ENCODE measurements at regions of chr18 and their contacts with region 1.

Region 1: GRCh38 chr18:25298853-25299274 is 53.1 kb downstream of the ZNF521 start:
- DNase-seq: peak; percentile 98
- H3K4me3 ChIP-seq: peak overlapping the region in 1 of 3 experiments; percentile 29
- H3K27ac ChIP-seq: peak overlapping the region; percentile 94
- H3K4me1 ChIP-seq: peaks cover 39% of the 10 kb centered on the region
- H3K27me3 ChIP-seq: no peaks in the 10 kb centered on the region
- CTCF ChIP-seq: no peak
- POLR2A ChIP-seq: peak; percentile 70

Region 2: GRCh38 chr18:25099895-25100294 is 199.0 kb before region 1 on chr18:
- CTCF ChIA-PET with region 1: no interaction called
- POLR2A ChIA-PET with region 1: no interaction called
- dilution Hi-C with region 1: no loop called
- intact Hi-C with region 1: loop called (anchors 2 kb)
- DNase-seq: peak; percentile 63
- H3K4me3 ChIP-seq: no peak overlapping the region
- H3K27ac ChIP-seq: peak overlapping the region; percentile 20
- H3K4me1 ChIP-seq: peaks cover 58% of the 10 kb centered on the region
- H3K27me3 ChIP-seq: no peaks in the 10 kb centered on the region
- CTCF ChIP-seq: no peak
- POLR2A ChIP-seq: no peak

Region 3: GRCh38 chr18:25253136-25253535 is 45.7 kb before region 1 on chr18:
- CTCF ChIA-PET with region 1: no interaction called
- POLR2A ChIA-PET with region 1: no interaction called
- dilution Hi-C with region 1: no loop called
- intact Hi-C with region 1: loop called (anchors 1 kb)
- DNase-seq: peak; percentile 63
- H3K4me3 ChIP-seq: no peak overlapping the region
- H3K27ac ChIP-seq: peak overlapping the region; percentile 74
- H3K4me1 ChIP-seq: peaks cover 61% of the 10 kb centered on the region
- H3K27me3 ChIP-seq: no peaks in the 10 kb centered on the region
- CTCF ChIP-seq: no peak
- POLR2A ChIP-seq: no peak

Region 4: GRCh38 chr18:25279133-25279532 is 19.7 kb before region 1 on chr18:
- CTCF ChIA-PET with region 1: interaction called, 3 read pairs
- POLR2A ChIA-PET with region 1: interaction called, 5 read pairs
- dilution Hi-C with region 1: no loop called
- intact Hi-C with region 1: loop called (anchors 1 kb)
- DNase-seq: peak; percentile 51
- H3K4me3 ChIP-seq: peak overlapping the region in 1 of 3 experiments; percentile 60
- H3K27ac ChIP-seq: peak overlapping the region; percentile 51
- H3K4me1 ChIP-seq: peaks cover 93% of the 10 kb centered on the region
- H3K27me3 ChIP-seq: no peaks in the 10 kb centered on the region
- CTCF ChIP-seq: no peak
- POLR2A ChIP-seq: no peak

Region 5: DNA sequence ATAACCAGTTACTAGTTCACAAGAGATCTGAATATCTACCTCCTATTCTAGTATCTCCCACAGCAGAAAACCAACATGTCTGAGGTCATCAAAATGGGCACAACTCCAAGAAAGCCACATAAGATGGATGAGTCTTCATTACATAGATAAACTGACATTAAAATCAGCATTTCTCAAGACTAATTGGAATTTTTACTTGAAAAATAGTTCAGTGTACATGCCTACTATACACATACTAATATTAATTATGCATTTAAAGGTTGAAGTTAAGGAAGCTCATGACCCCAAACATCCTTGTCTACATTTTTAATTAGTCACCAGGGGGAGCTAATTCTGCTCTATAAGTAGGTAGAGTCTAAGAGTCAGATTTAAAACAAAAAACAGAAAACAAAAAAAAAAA is 11.2 kb after region 1 on chr18:
- CTCF ChIA-PET with region 1: interaction called, 10 read pairs
- POLR2A ChIA-PET with region 1: interaction called, 3 read pairs
- dilution Hi-C with region 1: no loop called
- intact Hi-C with region 1: no loop called
- DNase-seq: peak; percentile 75
- H3K4me3 ChIP-seq: no peak overlapping the region
- H3K27ac ChIP-seq: no peak overlapping the region
- H3K4me1 ChIP-seq: peaks cover 35% of the 10 kb centered on the region
- H3K27me3 ChIP-seq: no peaks in the 10 kb centered on the region
- CTCF ChIP-seq: peak in 1 of 2 donors; percentile 1
- POLR2A ChIP-seq: no peak

Measured in endothelial cell of umbilical vein (primary cell).